ENCODE measurements at regions of chrX and their contacts with region 1.

Region 1: GRCh38 chrX:127879585-127879984 is 172.6 kb downstream of the ACTRT1 start:
- DNase-seq: peak; percentile 17
- ATAC-seq: no peak
- H3K4me3 ChIP-seq: no peak overlapping the region
- H3K27ac ChIP-seq: no peak overlapping the region
- H3K4me1 ChIP-seq: no peaks in the 10 kb centered on the region; the same call in 1 of the 2 replicates
- H3K27me3 ChIP-seq: no peaks in the 10 kb centered on the region
- CTCF ChIP-seq: no peak

Region 2: GRCh38 chrX:126244279-126244678 is 1635.3 kb before region 1 on chrX:
- CTCF ChIA-PET with region 1: no interaction called
- POLR2A ChIA-PET with region 1: no interaction called
- intact Hi-C with region 1: no loop called
- DNase-seq: no peak
- ATAC-seq: no peak
- H3K4me3 ChIP-seq: no peak overlapping the region
- H3K27ac ChIP-seq: no peak overlapping the region
- H3K4me1 ChIP-seq: no peaks in the 10 kb centered on the region
- H3K27me3 ChIP-seq: no peaks in the 10 kb centered on the region
- CTCF ChIP-seq: no peak

Region 3: GRCh38 chrX:127390316-127390715 is 489.3 kb before region 1 on chrX:
- CTCF ChIA-PET with region 1: no interaction called
- POLR2A ChIA-PET with region 1: no interaction called
- intact Hi-C with region 1: no loop called
- DNase-seq: no peak
- ATAC-seq: no peak
- H3K4me3 ChIP-seq: no peak overlapping the region
- H3K27ac ChIP-seq: no peak overlapping the region
- H3K4me1 ChIP-seq: no peaks in the 10 kb centered on the region
- H3K27me3 ChIP-seq: no peaks in the 10 kb centered on the region
- CTCF ChIP-seq: no peak

Region 4: DNA sequence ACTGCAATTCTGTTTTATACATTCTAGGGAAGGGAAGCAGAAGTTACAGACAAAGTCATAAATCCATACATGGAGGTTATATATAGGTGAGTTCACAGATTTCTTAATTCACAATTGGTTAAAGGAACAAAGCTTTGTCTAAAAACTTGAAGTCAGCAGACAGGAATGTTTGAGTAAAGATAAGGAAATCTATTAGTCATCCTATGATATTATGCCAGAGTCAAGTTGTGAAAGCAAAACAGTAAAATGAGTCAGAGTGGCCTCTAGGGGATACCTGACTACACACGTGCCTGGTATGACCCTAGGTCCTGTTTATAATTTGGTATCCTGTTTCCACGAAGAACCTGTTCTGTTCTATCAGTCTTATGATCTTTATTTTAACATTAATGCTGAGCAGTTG is 141.1 kb after region 1 on chrX:
- CTCF ChIA-PET with region 1: no interaction called
- POLR2A ChIA-PET with region 1: no interaction called
- intact Hi-C with region 1: loop called (anchors 2 kb)
- DNase-seq: peak; percentile 90
- ATAC-seq: peak; percentile 85
- H3K4me3 ChIP-seq: no peak overlapping the region
- H3K27ac ChIP-seq: no peak overlapping the region
- H3K4me1 ChIP-seq: peaks cover 12% of the 10 kb centered on the region
- H3K27me3 ChIP-seq: no peaks in the 10 kb centered on the region
- CTCF ChIP-seq: no peak

Measured in PC-3 (cell line).